Adrenal gland (tissue), 19 donors: ENCODE measurements at regions of chr11 and their contacts with region 1.

Region 1: DNA sequence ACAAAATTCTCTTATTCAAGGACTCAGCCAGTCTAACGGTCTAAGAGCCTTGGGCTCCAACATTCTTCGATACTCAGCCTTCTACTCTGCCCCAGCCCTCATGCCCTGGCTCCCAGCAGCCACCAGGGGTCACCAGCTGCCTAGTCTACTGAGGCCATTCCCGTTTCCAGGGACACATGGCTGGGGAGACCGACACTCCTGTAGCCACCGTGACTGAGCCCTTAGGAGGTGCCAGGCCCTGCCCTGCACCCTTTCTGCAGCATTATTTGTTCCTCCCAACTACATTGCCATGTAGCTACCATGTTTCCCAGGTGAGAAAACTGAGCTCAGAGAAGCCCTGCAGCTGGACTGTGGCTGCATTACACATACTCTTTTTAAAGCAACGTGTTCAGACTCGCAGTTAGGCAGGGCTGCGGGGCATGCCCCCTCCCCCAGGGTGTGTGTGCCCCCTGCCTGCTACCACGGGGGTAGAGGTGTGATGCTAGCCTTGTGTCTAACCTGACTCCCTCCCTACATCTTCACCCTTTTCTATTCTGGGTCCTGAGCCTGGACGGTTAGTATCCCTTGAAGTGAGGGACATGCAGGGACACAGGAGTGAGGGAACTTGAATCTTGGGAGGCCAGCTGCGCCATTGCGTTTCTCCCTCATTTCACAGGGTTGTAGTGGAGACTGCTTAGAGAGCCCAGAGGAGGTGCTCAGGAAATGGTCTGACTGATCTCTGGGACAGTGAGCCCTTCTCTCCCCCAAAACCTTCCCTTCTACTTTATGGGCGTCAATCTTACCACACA is 17.5 kb downstream of the ATG16L2 start:
- DNase-seq: peak; percentile 88 to 96 (median 93)
- H3K4me3 ChIP-seq: no peak overlapping the region
- H3K27ac ChIP-seq: peak overlapping the region in 3 of 5 donors; percentile 31 to 90 (median 82)
- H3K4me1 ChIP-seq: peaks cover 45 to 67% of the 10 kb centered on the region in 2 donors
- H3K27me3 ChIP-seq: no peaks in the 10 kb centered on the region
- CTCF ChIP-seq: peak; percentile 76 to 99 (median 98)
- POLR2A ChIP-seq: no peak

Region 2: GRCh38 chr11:72483412-72484186 is 348.1 kb before region 1 on chr11:
- intact Hi-C with region 1: no loop called
- DNase-seq: peak in 4 of 7 donors; percentile 27 to 47 (median 38)
- H3K4me3 ChIP-seq: no peak overlapping the region
- H3K27ac ChIP-seq: peak overlapping the region in 3 of 5 donors; percentile 16 to 84 (median 74)
- H3K4me1 ChIP-seq: no peaks in the 10 kb centered on the region
- H3K27me3 ChIP-seq: no peaks in the 10 kb centered on the region
- CTCF ChIP-seq: peak in 1 of 6 experiments; percentile 23
- POLR2A ChIP-seq: no peak

Region 3: GRCh38 chr11:72924568-72925190 is 93.0 kb after region 1 on chr11:
- intact Hi-C with region 1: loop called in 1 of 2 experiments (anchors 10 kb)
- DNase-seq: no peak
- H3K4me3 ChIP-seq: no peak overlapping the region
- H3K27ac ChIP-seq: peak overlapping the region in 1 of 5 donors; percentile 2
- H3K4me1 ChIP-seq: peaks cover 19 to 28% of the 10 kb centered on the region in 2 donors
- H3K27me3 ChIP-seq: no peaks in the 10 kb centered on the region
- CTCF ChIP-seq: peak in 5 of 6 experiments; percentile 38 to 83 (median 59)
- POLR2A ChIP-seq: no peak

Region 4: GRCh38 chr11:73001615-73002014 is 169.9 kb after region 1 on chr11:
- intact Hi-C with region 1: no loop called
- DNase-seq: no peak
- H3K4me3 ChIP-seq: no peak overlapping the region
- H3K27ac ChIP-seq: no peak overlapping the region
- H3K4me1 ChIP-seq: peaks cover 1 to 19% of the 10 kb centered on the region in 2 donors
- H3K27me3 ChIP-seq: no peaks in the 10 kb centered on the region
- CTCF ChIP-seq: no peak
- POLR2A ChIP-seq: no peak

Region 5: GRCh38 chr11:73177778-73178577 is 346.3 kb after region 1 on chr11:
- intact Hi-C with region 1: loop called (anchors 2 to 5 kb)
- DNase-seq: peak; percentile 84 to 95 (median 93)
- H3K4me3 ChIP-seq: no peak overlapping the region
- H3K27ac ChIP-seq: peak overlapping the region; percentile 3 to 87 (median 62)
- H3K4me1 ChIP-seq: peaks cover 19 to 41% of the 10 kb centered on the region in 2 donors
- H3K27me3 ChIP-seq: no peaks in the 10 kb centered on the region
- CTCF ChIP-seq: peak; percentile 72 to 96 (median 90)
- POLR2A ChIP-seq: no peak

Region 6: DNA sequence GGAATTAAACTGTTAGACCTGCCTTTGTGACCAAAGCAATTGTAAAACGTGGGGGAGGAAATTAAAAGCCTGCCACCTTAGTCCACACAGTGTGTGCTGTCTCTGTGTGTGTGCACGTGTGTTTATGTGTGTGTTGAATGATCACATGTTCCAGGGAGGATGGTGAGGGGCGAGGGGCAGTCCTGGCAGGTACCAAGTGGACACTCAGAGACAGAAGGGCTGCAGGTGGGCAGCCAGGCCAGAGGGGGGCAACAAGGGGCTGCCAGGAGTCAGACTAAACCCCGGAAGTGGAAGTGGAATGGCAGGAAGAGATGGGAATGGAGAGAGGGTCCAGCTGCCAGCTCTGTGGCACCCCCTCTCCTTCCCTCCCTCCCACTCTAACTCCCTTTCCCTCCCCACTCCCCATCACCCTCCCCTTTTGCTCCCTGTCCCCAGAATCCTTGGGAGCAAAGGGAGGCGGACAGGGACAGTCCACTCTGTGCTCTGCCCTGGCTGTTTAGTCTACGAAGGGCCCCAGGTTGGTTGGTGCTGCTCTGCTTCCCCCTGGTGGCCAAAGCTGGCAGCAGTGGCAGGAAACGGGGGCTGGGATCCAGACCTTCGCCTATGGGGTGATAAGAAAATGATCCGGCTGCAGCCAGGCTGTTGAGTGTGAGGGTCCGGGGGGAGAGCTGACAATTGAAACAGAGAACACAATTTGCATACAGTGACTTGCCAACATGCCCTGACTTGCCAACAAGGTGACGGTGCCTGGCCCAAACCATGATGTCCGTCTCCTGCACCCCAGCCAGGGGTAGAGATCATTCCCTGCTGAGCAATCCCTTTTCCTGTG is 410.8 kb after region 1 on chr11:
- intact Hi-C with region 1: loop called in 1 of 2 experiments (anchors 5 kb)
- DNase-seq: peak; percentile 76 to 88 (median 81)
- H3K4me3 ChIP-seq: no peak overlapping the region
- H3K27ac ChIP-seq: peak overlapping the region in 1 of 5 donors; percentile 15
- H3K4me1 ChIP-seq: peaks cover 8 to 25% of the 10 kb centered on the region in 2 donors
- H3K27me3 ChIP-seq: no peaks in the 10 kb centered on the region
- CTCF ChIP-seq: peak; percentile 73 to 94 (median 90)
- POLR2A ChIP-seq: no peak